ENCODE measurements at regions of chr18 and their contacts with region 1.

Region 1: DNA sequence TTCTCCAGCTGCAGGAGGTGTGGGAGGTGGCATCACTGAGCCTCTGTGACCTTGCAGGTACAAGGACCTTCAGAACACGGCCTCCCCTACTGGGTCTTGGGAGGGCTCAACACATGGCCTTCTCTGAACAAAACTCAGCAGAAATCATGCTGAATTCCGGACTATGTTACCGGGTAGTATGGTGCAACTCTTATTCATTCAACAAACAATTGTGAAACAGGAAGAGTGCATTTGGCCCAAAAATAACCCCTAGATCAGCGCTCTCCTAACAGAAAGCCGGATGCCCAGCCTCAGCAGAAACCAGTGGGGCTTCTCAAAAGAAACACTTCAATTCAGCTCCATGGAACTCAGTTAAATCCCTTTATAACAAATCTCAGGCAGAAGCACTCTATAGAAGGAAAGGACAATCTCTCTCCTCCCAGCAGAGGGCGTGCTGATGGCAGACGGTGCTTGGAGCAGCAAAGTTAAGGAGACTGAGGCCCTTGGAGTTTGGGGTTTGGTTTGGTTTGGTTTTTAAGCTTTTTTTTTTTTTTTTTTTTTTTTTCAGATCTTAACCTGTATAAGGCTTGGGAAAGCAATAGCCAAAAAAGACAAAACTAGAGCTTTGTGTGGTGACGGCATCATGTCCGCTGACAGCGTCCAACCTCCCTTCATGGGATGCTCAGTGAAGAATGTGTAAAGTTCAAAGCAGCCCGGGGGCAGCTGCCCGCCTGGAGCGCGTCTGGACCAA is 104.2 kb upstream of the SALL3 start:
- DNase-seq: peak in 5 of 9 experiments; percentile 3 to 30 (median 24)
- ATAC-seq: no peak
- H3K4me3 ChIP-seq: no peak overlapping the region
- H3K4me3 Mint-ChIP-seq: no peak overlapping the region
- H3K27ac ChIP-seq: no peak overlapping the region
- H3K27ac Mint-ChIP-seq: no peak overlapping the region
- H3K4me1 ChIP-seq: no peaks in the 10 kb centered on the region
- H3K4me1 Mint-ChIP-seq: no peaks in the 10 kb centered on the region
- H3K27me3 ChIP-seq: no peaks in the 10 kb centered on the region
- H3K27me3 Mint-ChIP-seq: peaks cover 25% of the 10 kb centered on the region
- CTCF ChIP-seq: peak; percentile 16

Region 2: GRCh38 chr18:79644006-79644665 is 768.7 kb after region 1 on chr18:
- CTCF ChIA-PET with region 1: no interaction called
- POLR2A ChIA-PET with region 1: no interaction called
- intact Hi-C with region 1: loop called in 1 of 2 experiments (anchors 10 kb)
- DNase-seq: peak; percentile 41 to 80 (median 69)
- ATAC-seq: peak; percentile 85
- H3K4me3 ChIP-seq: no peak overlapping the region
- H3K4me3 Mint-ChIP-seq: no peak overlapping the region
- H3K27ac ChIP-seq: no peak overlapping the region
- H3K27ac Mint-ChIP-seq: no peak overlapping the region
- H3K4me1 ChIP-seq: peaks cover 12% of the 10 kb centered on the region
- H3K4me1 Mint-ChIP-seq: peaks cover 11% of the 10 kb centered on the region
- H3K27me3 ChIP-seq: peaks cover 0 to 3% of the 10 kb centered on the region in 2 experiments
- H3K27me3 Mint-ChIP-seq: peaks cover 15% of the 10 kb centered on the region
- CTCF ChIP-seq: peak; percentile 97